Naive thymus-derived CD4-positive, alpha-beta T cell (primary cell): ENCODE measurements at regions of chr21 and their contacts with region 1.

Region 1: DNA sequence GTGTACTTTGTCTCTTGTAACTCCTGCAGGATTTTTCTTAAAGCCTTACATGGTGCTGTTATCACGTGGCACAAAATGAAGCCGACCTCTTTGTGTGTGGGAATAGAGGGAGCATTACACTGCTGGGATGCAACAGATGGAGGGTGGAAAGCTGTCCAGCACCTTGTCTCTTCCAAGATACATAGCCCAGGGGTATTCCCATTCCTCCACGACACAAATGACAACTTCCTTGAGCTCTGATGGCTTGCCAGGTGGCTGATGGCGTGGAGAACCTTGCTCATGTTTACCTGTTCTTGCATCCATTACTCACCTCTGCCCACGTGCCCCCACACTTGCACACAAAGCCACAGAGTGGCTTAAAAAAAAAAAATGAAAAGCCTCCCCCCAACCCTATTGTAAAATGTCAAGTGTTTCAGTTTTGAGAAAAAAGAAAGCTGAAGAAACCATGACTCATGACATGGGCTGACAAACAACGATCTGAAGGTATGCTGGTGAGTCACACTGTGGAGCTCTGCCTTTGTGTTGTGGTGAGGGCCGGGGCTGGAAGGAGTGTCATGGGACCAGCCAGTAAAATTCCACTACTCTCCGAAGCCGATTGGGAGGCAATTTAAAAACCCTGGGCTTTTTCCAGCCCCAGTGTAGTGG is 32.0 kb upstream of the ATP5PO start:
- DNase-seq: peak; percentile 47 to 95 (median 84)
- ATAC-seq: peak; percentile 76
- H3K4me3 ChIP-seq: peak overlapping the region; percentile 38
- H3K4me3 Mint-ChIP-seq: peak overlapping the region; percentile 71 to 87 (median 78)
- H3K27ac ChIP-seq: peak overlapping the region; percentile 93
- H3K27ac Mint-ChIP-seq: peak overlapping the region; percentile 98 to 100 (median 98)
- H3K4me1 ChIP-seq: peaks cover 56 to 64% of the 10 kb centered on the region in 2 donors
- H3K4me1 Mint-ChIP-seq: peaks cover 53 to 85% (median 77%) of the 10 kb centered on the region in 7 donors
- H3K27me3 ChIP-seq: no peaks in the 10 kb centered on the region
- H3K27me3 Mint-ChIP-seq: peaks cover 0 to 6% (median 0%) of the 10 kb centered on the region in 5 donors

Region 2: GRCh38 chr21:33171616-33172169 is 775.9 kb before region 1 on chr21:
- CTCF ChIA-PET with region 1: no interaction called
- POLR2A ChIA-PET with region 1: no interaction called
- intact Hi-C with region 1: no loop called
- DNase-seq: no peak
- ATAC-seq: no peak
- H3K4me3 ChIP-seq: no peak overlapping the region
- H3K4me3 Mint-ChIP-seq: no peak overlapping the region
- H3K27ac ChIP-seq: no peak overlapping the region
- H3K27ac Mint-ChIP-seq: no peak overlapping the region
- H3K4me1 ChIP-seq: no peaks in the 10 kb centered on the region
- H3K4me1 Mint-ChIP-seq: no peaks in the 10 kb centered on the region
- H3K27me3 ChIP-seq: no peaks in the 10 kb centered on the region
- H3K27me3 Mint-ChIP-seq: peaks cover 0 to 23% (median 10%) of the 10 kb centered on the region in 5 donors

Region 3: DNA sequence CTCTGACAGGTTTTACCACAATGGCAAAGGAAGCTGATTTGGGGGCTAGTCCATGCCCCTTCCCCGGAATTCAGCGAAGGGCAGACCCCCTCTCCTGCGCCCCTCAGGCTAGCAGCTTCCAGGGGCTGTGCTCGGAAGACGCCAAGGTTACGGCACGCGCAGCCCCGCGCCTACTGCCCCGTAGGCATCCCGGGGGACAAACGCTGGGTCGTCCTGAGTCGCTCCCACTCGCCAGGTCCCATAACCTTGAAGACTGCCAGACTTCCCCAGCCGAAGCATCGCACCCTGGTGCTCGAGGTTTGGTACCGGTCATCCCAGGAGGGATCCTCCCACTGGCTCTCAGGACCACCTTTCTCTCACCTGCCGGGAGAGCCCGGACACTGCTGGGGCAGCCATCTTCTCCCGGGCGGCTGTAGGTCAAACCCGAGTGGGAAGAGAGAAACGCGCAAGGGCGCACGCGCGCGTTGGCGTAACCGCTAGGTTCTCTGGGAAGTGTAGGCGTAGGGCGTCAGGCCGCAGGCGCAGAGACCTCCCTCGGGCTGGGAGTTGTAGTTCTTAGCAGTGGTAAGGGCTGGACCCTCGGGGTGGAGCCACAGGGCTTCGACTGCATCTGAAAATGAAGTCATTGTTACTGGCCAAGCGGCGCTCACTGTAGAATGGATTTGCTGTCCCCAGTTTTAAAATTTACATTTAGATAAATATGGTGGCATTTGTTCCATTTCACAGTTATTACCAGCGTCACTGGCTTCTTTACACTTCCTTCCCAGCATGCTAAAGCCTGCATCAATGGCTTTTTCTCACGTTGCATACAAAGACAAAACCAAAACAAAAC is 32.0 kb before region 1 on chr21 and contains the start of gene ATP5PO:
- CTCF ChIA-PET with region 1: no interaction called
- POLR2A ChIA-PET with region 1: interaction called, 9 read pairs
- intact Hi-C with region 1: loop called (anchors 1 kb)
- DNase-seq: peak; percentile 87 to 96 (median 93)
- ATAC-seq: peak; percentile 100
- H3K4me3 ChIP-seq: peak within 1 kb of the TSS; percentile 92
- H3K4me3 Mint-ChIP-seq: peak within 1 kb of the TSS; percentile 93 to 99 (median 98)
- H3K27ac ChIP-seq: peak within 1 kb of the TSS; percentile 92
- H3K27ac Mint-ChIP-seq: peak within 1 kb of the TSS; percentile 87 to 98 (median 97)
- H3K4me1 ChIP-seq: peaks cover 11 to 12% of the 10 kb centered on the region in 2 donors
- H3K4me1 Mint-ChIP-seq: peaks cover 14 to 40% (median 35%) of the 10 kb centered on the region in 7 donors
- H3K27me3 ChIP-seq: no peaks in the 10 kb centered on the region
- H3K27me3 Mint-ChIP-seq: no peaks in the 10 kb centered on the region
- total RNA-seq, gene ATP5PO: 123 to 185 (median 157) TPM

Region 4: DNA sequence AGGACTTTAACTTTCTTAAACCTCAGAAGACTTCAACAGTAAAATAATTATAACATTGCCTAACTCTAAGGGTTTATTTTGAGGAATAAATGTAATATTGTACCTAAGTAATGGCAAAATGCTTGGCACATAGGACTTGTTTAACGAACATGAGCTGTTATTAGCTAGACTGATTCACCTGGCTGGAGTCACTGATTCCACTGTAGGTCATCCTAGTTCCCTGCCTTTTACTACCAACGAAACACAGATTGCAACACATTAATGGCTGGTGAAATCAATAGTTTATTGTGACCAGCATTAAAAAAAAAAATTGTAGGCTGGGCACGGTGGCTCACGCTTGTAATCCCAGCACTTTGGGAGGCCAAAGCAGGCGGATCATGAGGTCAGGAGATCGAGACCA is 13.5 kb after region 1 on chr21:
- CTCF ChIA-PET with region 1: interaction called, 3 read pairs
- POLR2A ChIA-PET with region 1: interaction called, 8 read pairs
- intact Hi-C with region 1: loop called in 1 of 2 experiments (anchors 1 kb)
- DNase-seq: no peak
- ATAC-seq: no peak
- H3K4me3 ChIP-seq: no peak overlapping the region
- H3K4me3 Mint-ChIP-seq: no peak overlapping the region
- H3K27ac ChIP-seq: no peak overlapping the region
- H3K27ac Mint-ChIP-seq: peak overlapping the region in 1 of 9 donors; percentile 10
- H3K4me1 ChIP-seq: no peaks in the 10 kb centered on the region
- H3K4me1 Mint-ChIP-seq: peaks cover 16 to 47% (median 40%) of the 10 kb centered on the region in 7 donors
- H3K27me3 ChIP-seq: no peaks in the 10 kb centered on the region
- H3K27me3 Mint-ChIP-seq: no peaks in the 10 kb centered on the region

Region 5: GRCh38 chr21:33993286-33994231 is 46.0 kb after region 1 on chr21:
- CTCF ChIA-PET with region 1: interaction called, 3 read pairs
- POLR2A ChIA-PET with region 1: interaction called, 4 read pairs
- intact Hi-C with region 1: loop called in 1 of 2 experiments (anchors 2 kb)
- DNase-seq: no peak
- ATAC-seq: peak; percentile 81
- H3K4me3 ChIP-seq: no peak overlapping the region
- H3K4me3 Mint-ChIP-seq: no peak overlapping the region
- H3K27ac ChIP-seq: no peak overlapping the region
- H3K27ac Mint-ChIP-seq: peak overlapping the region in 4 of 9 donors; percentile 6 to 51 (median 35)
- H3K4me1 ChIP-seq: peaks cover 6% of the 10 kb centered on the region in 2 donors
- H3K4me1 Mint-ChIP-seq: peaks cover 14 to 29% (median 17%) of the 10 kb centered on the region in 7 donors
- H3K27me3 ChIP-seq: no peaks in the 10 kb centered on the region
- H3K27me3 Mint-ChIP-seq: peaks cover 0 to 4% (median 0%) of the 10 kb centered on the region in 5 donors

Region 6: GRCh38 chr21:34073032-34073869 is 125.7 kb after region 1 on chr21 and contains the starts of genes MRPS6 and SLC5A3:
- CTCF ChIA-PET with region 1: interaction called, 16 read pairs
- POLR2A ChIA-PET with region 1: interaction called, 58 read pairs
- intact Hi-C with region 1: loop called (anchors 1 kb)
- DNase-seq: peak; percentile 58 to 82 (median 72)
- ATAC-seq: peak; percentile 89
- H3K4me3 ChIP-seq: peak within 1 kb of the TSS; percentile 72
- H3K4me3 Mint-ChIP-seq: peak within 1 kb of the TSS; percentile 88 to 98 (median 96)
- H3K27ac ChIP-seq: peak within 1 kb of the TSS; percentile 82
- H3K27ac Mint-ChIP-seq: peak within 1 kb of the TSS; percentile 89 to 95 (median 93)
- H3K4me1 ChIP-seq: peaks cover 31 to 34% of the 10 kb centered on the region in 2 donors
- H3K4me1 Mint-ChIP-seq: peaks cover 9 to 54% (median 46%) of the 10 kb centered on the region in 7 donors
- H3K27me3 ChIP-seq: no peaks in the 10 kb centered on the region
- H3K27me3 Mint-ChIP-seq: peaks cover 0 to 7% (median 0%) of the 10 kb centered on the region in 5 donors
- total RNA-seq, gene MRPS6: 25.5 to 92.7 (median 87.9) TPM
- total RNA-seq, gene SLC5A3: 8.8 to 45.5 (median 34.0) TPM

Region 7: DNA sequence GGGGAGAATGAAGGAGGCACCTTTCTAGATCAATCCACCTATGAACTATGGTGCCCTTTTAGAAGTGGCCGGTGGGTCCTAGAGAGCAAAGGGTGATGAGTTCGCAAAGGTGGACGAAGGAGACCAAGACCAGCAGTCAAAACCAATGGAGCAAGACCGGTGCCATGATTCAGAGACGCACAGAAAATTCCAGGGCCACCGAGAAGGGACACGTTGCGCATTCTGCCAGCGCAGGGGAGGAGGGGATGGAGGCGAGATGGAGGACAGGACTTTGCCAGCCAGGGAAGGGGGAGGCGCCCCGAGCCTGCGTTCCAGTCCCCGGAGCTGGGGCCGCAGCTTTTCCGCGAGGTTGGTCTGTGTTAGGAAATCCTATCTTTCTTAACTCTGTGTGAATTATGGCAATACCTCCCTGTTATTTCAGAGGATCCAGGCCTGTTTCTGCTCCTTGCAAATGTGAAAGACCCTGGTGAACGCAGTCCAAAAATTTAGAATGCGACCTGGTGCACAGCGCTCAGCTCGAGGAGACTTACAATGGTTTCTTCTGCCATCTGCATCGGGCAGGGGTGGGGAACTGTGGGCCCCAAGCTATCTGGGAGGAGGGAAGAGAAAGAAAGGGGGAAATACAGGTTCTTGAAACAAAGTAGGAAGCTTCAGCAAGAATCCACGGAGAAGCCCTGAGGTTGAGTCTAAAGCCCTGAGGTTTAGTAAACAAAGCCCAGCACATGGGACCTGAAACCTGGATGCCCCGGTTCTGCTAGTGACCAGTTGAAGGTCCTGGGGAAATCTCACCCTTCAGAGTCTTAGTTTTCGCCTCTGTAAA is 255.2 kb after region 1 on chr21:
- CTCF ChIA-PET with region 1: interaction called, 4 read pairs
- POLR2A ChIA-PET with region 1: interaction called, 9 read pairs
- intact Hi-C with region 1: loop called in 1 of 2 experiments (anchors 10 kb)
- DNase-seq: no peak
- ATAC-seq: no peak
- H3K4me3 ChIP-seq: peak overlapping the region; percentile 47
- H3K4me3 Mint-ChIP-seq: peak overlapping the region; percentile 70 to 92 (median 86)
- H3K27ac ChIP-seq: no peak overlapping the region
- H3K27ac Mint-ChIP-seq: peak overlapping the region in 8 of 9 donors; percentile 24 to 87 (median 63)
- H3K4me1 ChIP-seq: peaks cover 8 to 31% of the 10 kb centered on the region in 2 donors
- H3K4me1 Mint-ChIP-seq: peaks cover 28 to 64% (median 56%) of the 10 kb centered on the region in 7 donors
- H3K27me3 ChIP-seq: no peaks in the 10 kb centered on the region
- H3K27me3 Mint-ChIP-seq: no peaks in the 10 kb centered on the region